A673 (cell line): ENCODE measurements at regions of chr3 and their contacts with region 1.

Region 1: GRCh38 chr3:36993326-36994283 is at the start of gene MLH1:
- DNase-seq: peak; percentile 95
- H3K4me3 ChIP-seq: peak within 1 kb of the TSS; percentile 71
- H3K27ac ChIP-seq: peak within 1 kb of the TSS; percentile 98
- H3K4me1 ChIP-seq: peaks cover 22% of the 10 kb centered on the region
- H3K27me3 ChIP-seq: no peaks in the 10 kb centered on the region
- CTCF ChIP-seq: no peak
- total RNA-seq, gene MLH1: 50.6 and 60.7 TPM in 2 replicates

Region 2: GRCh38 chr3:36060950-36061349 is 932.7 kb before region 1 on chr3:
- CTCF ChIA-PET with region 1: no interaction called
- POLR2A ChIA-PET with region 1: no interaction called
- intact Hi-C with region 1: no loop called
- DNase-seq: peak; percentile 3
- H3K4me3 ChIP-seq: no peak overlapping the region
- H3K27ac ChIP-seq: no peak overlapping the region
- H3K4me1 ChIP-seq: no peaks in the 10 kb centered on the region
- H3K27me3 ChIP-seq: peaks cover 17% of the 10 kb centered on the region
- CTCF ChIP-seq: no peak

Region 3: DNA sequence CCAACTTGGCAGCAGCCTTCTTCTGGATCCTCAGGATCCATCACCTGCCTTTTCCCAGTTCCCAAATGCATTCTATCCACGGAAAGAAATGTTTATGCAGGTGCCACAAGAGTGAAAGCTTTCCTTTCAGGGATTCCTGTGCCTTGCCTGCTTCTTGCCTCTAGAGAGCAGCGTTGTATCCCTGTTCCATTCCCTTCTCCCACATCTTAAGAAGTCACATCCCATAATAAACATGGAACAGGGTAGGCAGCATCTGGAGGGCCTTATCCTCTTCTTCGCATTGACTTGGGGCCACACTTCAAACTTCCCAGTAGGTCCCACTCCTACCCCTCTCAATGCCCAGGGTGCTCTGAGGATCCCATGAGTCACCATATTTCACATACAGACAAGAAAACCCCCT is 156.5 kb before region 1 on chr3:
- CTCF ChIA-PET with region 1: no interaction called
- POLR2A ChIA-PET with region 1: interaction called, 10 read pairs
- intact Hi-C with region 1: no loop called
- DNase-seq: peak; percentile 37
- H3K4me3 ChIP-seq: no peak overlapping the region
- H3K27ac ChIP-seq: no peak overlapping the region
- H3K4me1 ChIP-seq: no peaks in the 10 kb centered on the region
- H3K27me3 ChIP-seq: no peaks in the 10 kb centered on the region
- CTCF ChIP-seq: peak; percentile 71

Region 4: DNA sequence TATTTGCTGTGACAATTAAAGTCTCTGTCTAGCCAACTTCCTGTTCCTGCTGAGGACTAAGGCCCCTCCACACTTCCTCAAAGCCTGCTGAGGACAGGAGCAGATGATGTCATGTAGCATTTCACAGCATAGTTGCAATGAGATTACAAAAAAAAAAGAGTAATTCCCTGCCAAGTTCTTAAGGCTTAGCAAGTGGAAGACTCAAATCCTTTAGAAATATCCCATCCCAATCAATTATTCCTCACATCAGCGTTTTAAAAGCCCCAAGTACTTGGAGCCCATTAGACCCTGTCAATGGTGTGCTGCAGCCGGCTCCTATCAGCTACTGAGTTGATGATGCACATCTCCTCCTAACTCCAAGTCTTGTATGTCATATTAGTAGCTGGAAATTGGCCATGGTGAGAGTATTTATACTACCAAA is 100.5 kb before region 1 on chr3:
- CTCF ChIA-PET with region 1: no interaction called
- POLR2A ChIA-PET with region 1: no interaction called
- intact Hi-C with region 1: loop called (anchors 5 kb)
- DNase-seq: peak; percentile 99
- H3K4me3 ChIP-seq: no peak overlapping the region
- H3K27ac ChIP-seq: no peak overlapping the region
- H3K4me1 ChIP-seq: peaks cover 54% of the 10 kb centered on the region
- H3K27me3 ChIP-seq: peaks cover 4% of the 10 kb centered on the region
- CTCF ChIP-seq: no peak